Panc1 (cell line): ENCODE measurements at regions of chr16 and their contacts with region 1.

Region 1: DNA sequence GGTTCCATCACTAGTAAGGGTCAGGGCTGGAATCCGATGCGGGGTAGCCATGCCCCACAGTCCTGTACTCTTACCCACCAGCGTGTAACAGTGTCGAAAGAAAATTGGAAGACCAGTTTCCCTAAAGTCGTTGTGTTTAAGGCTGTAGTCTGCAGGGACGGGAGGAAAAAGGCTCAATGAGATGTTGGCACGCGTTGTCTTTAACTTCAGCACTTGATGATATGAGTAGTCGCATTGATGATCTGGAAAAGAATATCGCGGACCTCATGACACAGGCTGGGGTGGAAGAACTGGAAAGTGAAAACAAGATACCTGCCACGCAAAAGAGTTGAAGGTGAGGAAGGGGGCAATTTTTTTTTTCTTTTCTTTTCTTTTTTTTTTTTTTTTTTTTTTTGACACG is 1.3 kb downstream of the HSBP1 start:
- DNase-seq: no peak
- ATAC-seq: no peak
- H3K4me3 ChIP-seq: peak overlapping the region; percentile 86 to 88
- H3K27ac ChIP-seq: peak overlapping the region; percentile 81
- H3K4me1 ChIP-seq: peaks cover 4% of the 10 kb centered on the region
- H3K27me3 ChIP-seq: no peaks in the 10 kb centered on the region
- CTCF ChIP-seq: no peak

Region 2: DNA sequence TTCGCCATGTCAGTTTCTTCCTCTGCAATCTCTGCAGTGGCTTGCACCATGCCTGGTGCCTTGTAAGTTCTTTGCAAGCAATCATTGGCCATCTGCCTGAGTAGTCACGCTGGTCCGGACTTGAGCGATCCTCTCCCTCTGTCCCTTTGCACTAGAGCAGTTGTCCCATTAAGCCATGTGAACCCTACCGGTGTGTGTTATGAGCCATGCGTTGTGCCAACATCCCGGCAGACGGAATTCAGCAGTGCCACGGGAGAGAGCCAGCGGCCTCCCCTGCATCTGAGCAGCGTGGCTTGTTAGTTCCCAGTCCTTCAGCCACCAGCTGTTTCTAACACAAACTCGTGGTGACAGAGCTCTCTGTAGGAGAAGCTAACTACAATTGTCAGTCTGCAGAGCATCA is 276.5 kb before region 1 on chr16:
- CTCF ChIA-PET with region 1: interaction called, 15 read pairs
- POLR2A ChIA-PET with region 1: no interaction called
- in situ Hi-C with region 1: no loop called
- intact Hi-C with region 1: no loop called
- DNase-seq: no peak
- ATAC-seq: no peak
- H3K4me3 ChIP-seq: no peak overlapping the region
- H3K27ac ChIP-seq: no peak overlapping the region
- H3K4me1 ChIP-seq: no peaks in the 10 kb centered on the region
- H3K27me3 ChIP-seq: no peaks in the 10 kb centered on the region; the same call in 1 of the 2 replicates
- CTCF ChIP-seq: no peak